BJ (cell line): ENCODE measurements at regions of chrX and their contacts with region 1.

Region 1: DNA sequence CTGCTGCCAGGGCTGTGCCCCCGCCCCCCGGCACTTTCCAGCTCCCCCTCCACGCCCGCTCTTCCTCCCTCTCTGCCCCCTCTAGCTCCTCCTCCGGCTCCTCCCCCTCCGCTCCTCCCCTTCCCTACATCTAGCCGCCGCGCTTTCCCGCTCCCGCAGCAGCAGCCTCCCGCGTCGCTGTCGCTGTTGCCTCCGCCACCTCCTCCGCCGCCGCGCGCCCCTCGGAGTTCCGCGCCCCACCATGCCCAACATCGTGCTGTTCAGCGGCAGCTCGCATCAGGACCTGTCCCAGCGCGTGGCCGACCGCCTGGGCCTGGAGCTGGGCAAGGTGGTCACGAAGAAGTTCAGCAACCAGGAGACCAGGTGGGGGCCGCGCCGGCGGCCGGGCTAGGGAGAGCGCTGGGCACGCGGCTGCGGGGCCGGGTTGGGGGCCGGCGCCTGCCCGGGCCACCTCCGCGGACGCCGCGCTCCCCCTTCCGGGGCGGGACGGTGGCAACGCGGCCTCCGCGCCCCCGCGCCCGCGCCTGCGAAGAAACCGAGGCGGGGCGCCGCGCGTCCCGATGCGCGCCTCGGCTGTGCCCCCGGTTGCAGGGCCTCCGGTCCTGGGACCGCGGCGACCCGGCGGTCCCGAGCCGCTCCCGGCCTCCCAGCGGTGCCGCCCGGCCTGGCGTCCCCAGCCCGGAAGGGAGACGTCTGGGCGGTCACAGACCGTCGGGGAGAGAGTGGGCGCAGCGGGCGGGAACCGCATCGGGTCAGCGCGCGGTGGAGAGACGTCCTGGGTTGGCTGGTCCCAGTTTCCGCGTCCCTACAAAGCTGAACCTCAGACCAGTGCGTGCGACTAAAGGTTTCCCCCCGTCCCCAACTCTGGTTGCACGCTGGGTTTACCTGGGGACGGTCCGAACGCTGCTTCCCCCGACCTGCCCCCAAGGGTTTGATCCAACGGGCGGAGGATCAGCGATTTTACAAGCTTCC is at the start of gene PRPS2:
- DNase-seq: no peak
- H3K4me3 ChIP-seq: peak within 1 kb of the TSS; percentile 75
- H3K27me3 ChIP-seq: 0 out of 2 replicates have a peak, but pooled peaks cover 2% of the 10 kb centered on the region
- CTCF ChIP-seq: no peak
- polyA plus RNA-seq, gene PRPS2: 20.0 and 20.5 TPM in 2 replicates

Region 2: GRCh38 chrX:11665144-11666111 is 1126.1 kb before region 1 on chrX and contains the start of gene ARHGAP6:
- CTCF ChIA-PET with region 1: no interaction called
- POLR2A ChIA-PET with region 1: interaction called, 14 read pairs
- DNase-seq: no peak
- H3K4me3 ChIP-seq: peak within 1 kb of the TSS; percentile 31
- H3K27me3 ChIP-seq: peaks cover 8% of the 10 kb centered on the region
- CTCF ChIP-seq: no peak
- polyA plus RNA-seq, gene ARHGAP6: 1.0 and 1.3 TPM in 2 replicates

Region 3: GRCh38 chrX:12779534-12779933 is 12.0 kb before region 1 on chrX:
- CTCF ChIA-PET with region 1: no interaction called
- POLR2A ChIA-PET with region 1: no interaction called
- DNase-seq: no peak
- H3K4me3 ChIP-seq: no peak overlapping the region
- H3K27me3 ChIP-seq: no peaks in the 10 kb centered on the region
- CTCF ChIP-seq: no peak